Stomach (tissue), 19 donors: ENCODE measurements at regions of chr11 and their contacts with region 1.

Region 1: GRCh38 chr11:60615497-60615896 is 83.9 kb upstream of the MS4A8 start:
- DNase-seq: no peak
- H3K4me3 ChIP-seq: no peak overlapping the region
- H3K27ac ChIP-seq: no peak overlapping the region
- H3K4me1 ChIP-seq: no peaks in the 10 kb centered on the region
- H3K27me3 ChIP-seq: peaks cover 0 to 5% (median 4%) of the 10 kb centered on the region in 3 donors
- CTCF ChIP-seq: no peak
- EP300 ChIP-seq: no peak
- POLR2A ChIP-seq: no peak

Region 2: GRCh38 chr11:60318726-60319125 is 296.8 kb before region 1 on chr11:
- intact Hi-C with region 1: no loop called
- DNase-seq: no peak
- H3K4me3 ChIP-seq: no peak overlapping the region
- H3K27ac ChIP-seq: no peak overlapping the region
- H3K4me1 ChIP-seq: no peaks in the 10 kb centered on the region
- H3K27me3 ChIP-seq: no peaks in the 10 kb centered on the region
- CTCF ChIP-seq: no peak
- EP300 ChIP-seq: no peak
- POLR2A ChIP-seq: no peak

Region 3: GRCh38 chr11:60357771-60358170 is 257.7 kb before region 1 on chr11:
- intact Hi-C with region 1: loop called (anchors 5 kb)
- DNase-seq: no peak
- H3K4me3 ChIP-seq: no peak overlapping the region
- H3K27ac ChIP-seq: no peak overlapping the region
- H3K4me1 ChIP-seq: no peaks in the 10 kb centered on the region
- H3K27me3 ChIP-seq: no peaks in the 10 kb centered on the region
- CTCF ChIP-seq: no peak
- EP300 ChIP-seq: no peak
- POLR2A ChIP-seq: no peak

Region 4: GRCh38 chr11:60504219-60504905 is 111.1 kb before region 1 on chr11:
- intact Hi-C with region 1: no loop called
- DNase-seq: no peak
- H3K4me3 ChIP-seq: no peak overlapping the region
- H3K27ac ChIP-seq: no peak overlapping the region
- H3K4me1 ChIP-seq: no peaks in the 10 kb centered on the region
- H3K27me3 ChIP-seq: no peaks in the 10 kb centered on the region
- CTCF ChIP-seq: no peak
- EP300 ChIP-seq: no peak
- POLR2A ChIP-seq: no peak